Activated naive CD8-positive, alpha-beta T cell treated with anti-CD3 and anti-CD28 coated beads, Interleukin-2, amount 10 ng/mL, durations not matched to agents 7 days and 5 days (primary cell): ENCODE measurements at regions of chr2 and their contacts with region 1.

Region 1: GRCh38 chr2:98455494-98455976 is 10.9 kb downstream of the INPP4A start:
- DNase-seq: no peak
- ATAC-seq: peak; percentile 26
- H3K4me3 Mint-ChIP-seq: peak overlapping the region; percentile 79
- H3K27ac Mint-ChIP-seq: peak overlapping the region; percentile 87
- H3K4me1 Mint-ChIP-seq: peaks cover 92% of the 10 kb centered on the region
- H3K27me3 Mint-ChIP-seq: no peaks in the 10 kb centered on the region

Region 2: GRCh38 chr2:98324181-98324580 is 131.4 kb before region 1 on chr2:
- POLR2A ChIA-PET with region 1: no interaction called
- DNase-seq: no peak
- ATAC-seq: no peak
- H3K4me3 Mint-ChIP-seq: no peak overlapping the region
- H3K27ac Mint-ChIP-seq: no peak overlapping the region
- H3K4me1 Mint-ChIP-seq: no peaks in the 10 kb centered on the region
- H3K27me3 Mint-ChIP-seq: peaks cover 31% of the 10 kb centered on the region

Region 3: GRCh38 chr2:98444436-98445176 is 10.9 kb before region 1 on chr2 and contains the start of gene INPP4A:
- POLR2A ChIA-PET with region 1: interaction called, 75 read pairs
- DNase-seq: peak; percentile 88
- ATAC-seq: peak; percentile 69
- H3K4me3 Mint-ChIP-seq: peak within 1 kb of the TSS; percentile 96
- H3K27ac Mint-ChIP-seq: peak within 1 kb of the TSS; percentile 95
- H3K4me1 Mint-ChIP-seq: peaks cover 32% of the 10 kb centered on the region
- H3K27me3 Mint-ChIP-seq: no peaks in the 10 kb centered on the region
- total RNA-seq, gene INPP4A: 147 to 159 TPM